GM12878 (cell line): ENCODE measurements at regions of chr2 and their contacts with region 1.

Region 1: DNA sequence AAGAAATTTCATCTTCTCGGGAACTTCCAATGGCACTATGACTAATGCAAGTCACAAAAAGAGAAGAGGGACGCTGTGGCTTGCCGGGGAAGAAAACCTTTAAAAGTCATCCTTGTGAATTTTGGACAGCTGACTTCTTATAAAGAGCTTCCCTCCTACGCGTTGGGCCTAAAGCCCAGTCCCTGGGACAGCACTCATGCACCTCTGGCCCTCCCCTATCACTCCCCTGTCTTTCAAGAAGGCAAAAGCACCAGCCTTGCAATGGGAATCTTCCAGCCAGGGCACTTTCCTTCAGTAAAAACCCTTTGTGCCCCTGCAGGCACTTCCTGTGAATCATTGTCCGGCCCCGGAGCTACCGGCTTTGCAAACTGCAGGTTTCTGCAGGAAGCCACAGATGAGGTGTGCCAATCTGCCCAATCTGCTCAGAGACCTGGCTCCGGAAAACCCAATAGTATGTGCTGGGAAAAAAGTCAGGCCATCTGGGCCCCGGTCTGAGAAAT is 7.1 kb downstream of the MREG start:
- DNase-seq: peak; percentile 73
- ATAC-seq: peak; percentile 40
- H3K4me3 ChIP-seq: peak overlapping the region; percentile 61
- H3K27ac ChIP-seq: peak overlapping the region; percentile 90
- H3K4me1 ChIP-seq: peaks cover 55% of the 10 kb centered on the region
- H3K27me3 ChIP-seq: no peaks in the 10 kb centered on the region
- CTCF ChIP-seq: no peak
- EP300 ChIP-seq: peak in 1 of 2 experiments; percentile 60; a peak in 2 of 4 replicates
- POLR2A ChIP-seq: peak; percentile 41; the same call in 1 of the 2 replicates
- RAD21 ChIP-seq: peak; percentile 3; the same call in 1 of the 2 replicates

Region 2: GRCh38 chr2:215969131-215969841 is 36.9 kb before region 1 on chr2:
- CTCF ChIA-PET with region 1: interaction called, 5 read pairs
- POLR2A ChIA-PET with region 1: interaction called, 3 read pairs
- RAD21 ChIA-PET with region 1: interaction called, 8 read pairs
- SMC1A ChIA-PET with region 1: interaction called, 13 read pairs
- in situ Hi-C with region 1: no loop called
- intact Hi-C with region 1: no loop called
- DNase-seq: no peak
- ATAC-seq: peak; percentile 27; the same call in 1 of the 3 replicates
- H3K4me3 ChIP-seq: no peak overlapping the region
- H3K27ac ChIP-seq: peak overlapping the region; percentile 20; the same call in 1 of the 2 replicates
- H3K4me1 ChIP-seq: peaks cover 5% of the 10 kb centered on the region; the same call in 1 of the 2 replicates
- H3K27me3 ChIP-seq: no peaks in the 10 kb centered on the region
- CTCF ChIP-seq: no peak
- EP300 ChIP-seq: no peak
- POLR2A ChIP-seq: no peak
- RAD21 ChIP-seq: no peak

Region 3: DNA sequence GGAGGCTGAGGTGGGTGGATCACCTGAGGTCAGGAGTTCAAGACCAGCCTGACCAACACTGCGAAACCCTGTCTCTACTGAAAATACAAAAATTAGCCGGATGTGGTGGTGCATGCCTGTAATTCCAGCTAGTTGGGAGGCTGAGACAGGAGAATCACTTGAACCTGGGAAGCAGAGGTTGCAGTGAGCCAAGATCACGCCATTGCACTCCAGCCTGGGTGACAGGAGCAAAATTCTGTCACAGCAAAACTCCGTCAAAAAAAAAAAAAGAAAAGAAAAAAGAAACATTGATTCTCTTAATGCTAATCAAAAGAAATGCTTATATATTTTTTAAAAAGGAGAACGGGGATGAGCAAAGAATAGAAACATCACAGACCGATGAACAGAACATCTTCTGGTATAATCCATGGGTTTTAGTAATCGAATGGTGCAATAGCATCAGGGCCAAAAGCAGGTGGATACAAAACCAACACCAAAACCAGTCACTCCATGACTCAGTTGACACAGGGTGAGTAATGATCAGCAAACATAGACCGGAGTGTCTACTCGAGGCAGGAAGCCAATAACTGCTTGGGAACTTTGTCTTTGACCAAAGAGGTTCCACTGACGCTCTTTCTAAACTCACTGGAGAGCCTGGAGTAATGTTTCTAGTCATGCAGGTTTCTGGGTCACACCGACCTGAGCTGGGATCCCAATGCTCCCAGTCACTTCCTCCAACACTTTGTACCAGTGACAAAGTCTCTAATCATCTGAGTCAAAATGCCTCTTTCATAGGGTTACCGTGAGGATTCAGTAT is 23.9 kb before region 1 on chr2:
- CTCF ChIA-PET with region 1: interaction called, 5 read pairs
- POLR2A ChIA-PET with region 1: interaction called, 6 read pairs
- RAD21 ChIA-PET with region 1: interaction called, 7 read pairs
- SMC1A ChIA-PET with region 1: interaction called, 17 read pairs
- in situ Hi-C with region 1: no loop called
- intact Hi-C with region 1: loop called (anchors 2 kb)
- DNase-seq: peak; percentile 57
- ATAC-seq: no peak
- H3K4me3 ChIP-seq: no peak overlapping the region
- H3K27ac ChIP-seq: peak overlapping the region; percentile 37
- H3K4me1 ChIP-seq: peaks cover 15% of the 10 kb centered on the region
- H3K27me3 ChIP-seq: no peaks in the 10 kb centered on the region
- CTCF ChIP-seq: no peak
- EP300 ChIP-seq: no peak
- POLR2A ChIP-seq: no peak
- RAD21 ChIP-seq: no peak

Region 4: DNA sequence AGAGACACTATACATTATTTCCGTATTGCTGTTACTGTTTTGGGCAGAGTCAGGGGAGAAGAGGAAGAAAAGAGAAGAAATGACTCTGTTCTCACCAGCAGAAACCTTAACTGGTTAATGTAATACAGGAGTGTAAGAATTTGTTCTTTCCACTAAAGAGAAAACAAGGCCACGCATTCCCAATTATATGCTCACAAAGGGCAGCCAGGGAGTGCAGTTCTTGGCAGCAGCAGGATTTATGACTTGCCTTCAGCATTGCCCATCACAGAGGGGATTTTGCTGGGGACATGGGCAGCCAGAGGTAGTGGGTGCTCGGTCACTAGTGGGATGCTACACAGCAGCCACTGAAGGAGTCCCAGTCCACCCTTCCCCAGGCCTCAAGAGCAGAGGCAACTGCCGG is 11.3 kb before region 1 on chr2:
- CTCF ChIA-PET with region 1: interaction called, 6 read pairs
- POLR2A ChIA-PET with region 1: interaction called, 24 read pairs
- RAD21 ChIA-PET with region 1: interaction called, 3 read pairs
- SMC1A ChIA-PET with region 1: interaction called, 17 read pairs
- in situ Hi-C with region 1: no loop called
- intact Hi-C with region 1: no loop called
- DNase-seq: no peak
- ATAC-seq: no peak
- H3K4me3 ChIP-seq: no peak overlapping the region
- H3K27ac ChIP-seq: no peak overlapping the region
- H3K4me1 ChIP-seq: no peaks in the 10 kb centered on the region
- H3K27me3 ChIP-seq: no peaks in the 10 kb centered on the region
- CTCF ChIP-seq: no peak
- EP300 ChIP-seq: no peak
- POLR2A ChIP-seq: no peak
- RAD21 ChIP-seq: no peak

Region 5: GRCh38 chr2:216023055-216023648 is 16.9 kb after region 1 on chr2:
- CTCF ChIA-PET with region 1: interaction called, 64 read pairs
- POLR2A ChIA-PET with region 1: interaction called, 61 read pairs
- RAD21 ChIA-PET with region 1: interaction called, 104 read pairs
- SMC1A ChIA-PET with region 1: interaction called, 70 read pairs
- in situ Hi-C with region 1: no loop called
- intact Hi-C with region 1: no loop called
- DNase-seq: no peak
- ATAC-seq: peak; percentile 97
- H3K4me3 ChIP-seq: no peak overlapping the region
- H3K27ac ChIP-seq: no peak overlapping the region
- H3K4me1 ChIP-seq: no peaks in the 10 kb centered on the region
- H3K27me3 ChIP-seq: no peaks in the 10 kb centered on the region
- CTCF ChIP-seq: peak; percentile 70 to 73 (median 71)
- EP300 ChIP-seq: no peak
- POLR2A ChIP-seq: no peak
- RAD21 ChIP-seq: peak; percentile 89